HepG2 (cell line): ENCODE measurements at regions of chr3 and their contacts with region 1.

Region 1: GRCh38 chr3:6791161-6791560 is 69.8 kb upstream of the GRM7 start:
- DNase-seq: no peak
- ATAC-seq: no peak
- H3K4me3 ChIP-seq: no peak overlapping the region
- H3K27ac ChIP-seq: no peak overlapping the region
- H3K4me1 ChIP-seq: no peaks in the 10 kb centered on the region
- H3K27me3 ChIP-seq: no peaks in the 10 kb centered on the region
- CTCF ChIP-seq: no peak
- EP300 ChIP-seq: no peak
- POLR2A ChIP-seq: no peak
- RAD21 ChIP-seq: no peak

Region 2: GRCh38 chr3:6743067-6743720 is 48.0 kb before region 1 on chr3:
- CTCF ChIA-PET with region 1: no interaction called
- POLR2A ChIA-PET with region 1: no interaction called
- in situ Hi-C with region 1: no loop called
- intact Hi-C with region 1: no loop called
- DNase-seq: no peak
- ATAC-seq: no peak
- H3K4me3 ChIP-seq: no peak overlapping the region
- H3K27ac ChIP-seq: no peak overlapping the region
- H3K4me1 ChIP-seq: no peaks in the 10 kb centered on the region
- H3K27me3 ChIP-seq: no peaks in the 10 kb centered on the region
- CTCF ChIP-seq: no peak
- EP300 ChIP-seq: no peak
- POLR2A ChIP-seq: no peak
- RAD21 ChIP-seq: no peak

Region 3: GRCh38 chr3:6807967-6808588 is 16.9 kb after region 1 on chr3:
- CTCF ChIA-PET with region 1: no interaction called
- POLR2A ChIA-PET with region 1: no interaction called
- in situ Hi-C with region 1: no loop called
- intact Hi-C with region 1: loop called (anchors 1 kb)
- DNase-seq: no peak
- ATAC-seq: no peak
- H3K4me3 ChIP-seq: no peak overlapping the region
- H3K27ac ChIP-seq: no peak overlapping the region
- H3K4me1 ChIP-seq: no peaks in the 10 kb centered on the region
- H3K27me3 ChIP-seq: no peaks in the 10 kb centered on the region
- CTCF ChIP-seq: no peak
- EP300 ChIP-seq: no peak
- POLR2A ChIP-seq: no peak
- RAD21 ChIP-seq: no peak

Region 4: DNA sequence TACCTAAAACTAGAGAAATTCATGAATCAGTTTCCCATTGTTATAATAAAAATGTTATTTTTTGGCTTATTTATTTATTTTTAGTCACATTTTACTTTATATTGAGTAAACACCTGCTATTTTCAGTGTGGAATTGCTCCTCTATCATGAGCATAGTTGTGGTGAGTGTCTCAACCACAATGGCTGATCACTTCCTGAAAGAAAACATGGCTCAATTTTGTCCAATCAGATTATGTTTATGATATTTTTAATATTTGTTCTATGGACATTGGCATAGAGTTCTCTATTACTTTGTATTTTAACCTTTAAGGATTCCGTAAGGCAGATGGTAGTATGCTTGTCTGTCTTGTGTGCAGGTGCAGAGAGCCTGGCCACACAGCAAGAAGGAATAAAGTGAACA is 53.6 kb after region 1 on chr3:
- CTCF ChIA-PET with region 1: no interaction called
- POLR2A ChIA-PET with region 1: no interaction called
- in situ Hi-C with region 1: no loop called
- intact Hi-C with region 1: no loop called
- DNase-seq: no peak
- ATAC-seq: no peak
- H3K4me3 ChIP-seq: no peak overlapping the region
- H3K27ac ChIP-seq: no peak overlapping the region
- H3K4me1 ChIP-seq: no peaks in the 10 kb centered on the region
- H3K27me3 ChIP-seq: no peaks in the 10 kb centered on the region
- CTCF ChIP-seq: no peak
- EP300 ChIP-seq: no peak
- POLR2A ChIP-seq: no peak
- RAD21 ChIP-seq: no peak